OCI-LY7 (cell line): ENCODE measurements at regions of chr13 and their contacts with region 1.

Region 1: GRCh38 chr13:33799950-33800592 is 17.9 kb upstream of the RFC3 start:
- DNase-seq: peak; percentile 76
- H3K4me3 ChIP-seq: no peak overlapping the region
- H3K27ac ChIP-seq: peak overlapping the region; percentile 43
- H3K4me1 ChIP-seq: peaks cover 49% of the 10 kb centered on the region
- CTCF ChIP-seq: peak; percentile 91

Region 2: DNA sequence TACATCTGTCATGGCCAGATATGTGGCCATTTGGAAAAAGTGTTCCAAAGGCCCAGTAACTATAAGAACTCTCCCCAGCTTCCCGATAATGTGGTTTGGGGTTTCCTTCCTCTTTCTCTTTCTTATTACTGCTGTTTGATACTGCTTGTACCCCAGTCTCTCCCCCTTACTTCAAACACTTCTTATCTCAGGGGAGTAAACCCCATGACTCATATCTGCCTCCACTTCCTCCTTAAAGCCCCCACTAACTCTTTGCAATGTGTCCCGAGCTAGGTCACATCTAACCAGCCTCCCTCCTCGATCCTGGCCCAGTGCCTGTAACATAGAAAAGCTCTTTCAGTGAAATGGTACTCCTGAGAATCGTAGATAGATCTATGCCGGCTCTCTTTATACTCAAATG is 432.1 kb before region 1 on chr13:
- CTCF ChIA-PET with region 1: no interaction called
- POLR2A ChIA-PET with region 1: no interaction called
- intact Hi-C with region 1: no loop called
- DNase-seq: no peak
- H3K4me3 ChIP-seq: no peak overlapping the region
- H3K27ac ChIP-seq: no peak overlapping the region
- H3K4me1 ChIP-seq: no peaks in the 10 kb centered on the region
- CTCF ChIP-seq: no peak

Region 3: DNA sequence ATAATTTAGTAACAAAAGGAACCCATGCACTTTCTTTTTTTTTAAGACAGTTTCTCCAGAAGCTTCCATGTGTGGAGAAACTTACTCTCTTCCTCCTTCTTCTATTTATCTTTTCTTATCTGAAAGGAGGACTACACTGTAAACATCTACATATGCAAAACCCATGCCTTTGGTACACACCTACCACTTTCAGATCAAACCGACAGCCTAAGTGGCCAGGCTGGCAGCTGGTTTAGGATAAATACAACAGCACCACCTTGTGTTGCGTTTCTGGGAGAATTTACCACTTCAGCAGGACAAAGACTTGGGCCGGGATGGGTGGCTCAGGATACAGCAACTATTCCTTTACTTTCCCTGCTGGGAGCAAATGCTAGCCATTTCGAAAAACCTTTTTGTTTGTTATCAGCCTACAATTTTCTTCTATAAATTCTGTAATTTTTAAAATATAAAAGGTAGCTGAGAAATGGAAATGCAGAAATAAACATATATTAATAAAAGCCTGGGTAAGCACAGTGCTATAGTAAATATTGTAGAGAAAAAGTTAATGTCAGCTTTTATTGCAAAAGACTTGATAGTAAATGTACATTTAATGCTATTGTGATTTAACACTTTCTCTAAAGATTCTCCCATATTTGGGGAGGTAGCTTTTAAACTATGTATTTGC is 76.2 kb before region 1 on chr13:
- CTCF ChIA-PET with region 1: no interaction called
- POLR2A ChIA-PET with region 1: interaction called, 22 read pairs
- intact Hi-C with region 1: no loop called
- DNase-seq: peak; percentile 91
- H3K4me3 ChIP-seq: no peak overlapping the region
- H3K27ac ChIP-seq: peak overlapping the region; percentile 24
- H3K4me1 ChIP-seq: peaks cover 54% of the 10 kb centered on the region
- CTCF ChIP-seq: peak; percentile 91

Region 4: DNA sequence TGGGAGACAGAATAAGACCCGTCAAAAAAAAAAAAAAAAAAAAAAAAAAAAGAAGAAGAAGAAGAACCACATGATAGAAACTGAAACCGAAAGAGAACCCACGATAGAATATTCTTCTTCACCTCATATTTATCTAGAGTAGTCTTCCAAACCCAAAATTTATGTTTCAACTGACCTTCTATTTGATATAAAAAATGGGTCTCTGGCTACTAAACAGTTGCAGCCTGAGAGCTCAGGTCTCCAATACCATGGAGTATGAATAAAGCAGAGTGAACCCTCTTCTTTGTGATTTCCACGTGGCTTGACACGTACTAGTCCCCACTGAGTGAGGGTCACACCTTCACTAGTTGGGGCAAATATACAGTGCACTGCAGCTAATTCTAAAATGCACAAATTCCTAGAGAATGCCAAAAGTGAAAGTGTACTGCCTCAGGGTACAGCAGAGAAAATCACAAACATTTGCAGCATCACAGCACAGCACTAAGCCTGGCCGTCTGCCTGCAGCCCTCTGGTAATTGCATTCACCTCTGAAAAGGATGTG is 12.9 kb before region 1 on chr13:
- CTCF ChIA-PET with region 1: interaction called, 3 read pairs
- POLR2A ChIA-PET with region 1: interaction called, 46 read pairs
- intact Hi-C with region 1: no loop called
- DNase-seq: peak; percentile 53
- H3K4me3 ChIP-seq: peak overlapping the region; percentile 58
- H3K27ac ChIP-seq: peak overlapping the region; percentile 53
- H3K4me1 ChIP-seq: peaks cover 29% of the 10 kb centered on the region
- CTCF ChIP-seq: no peak

Region 5: DNA sequence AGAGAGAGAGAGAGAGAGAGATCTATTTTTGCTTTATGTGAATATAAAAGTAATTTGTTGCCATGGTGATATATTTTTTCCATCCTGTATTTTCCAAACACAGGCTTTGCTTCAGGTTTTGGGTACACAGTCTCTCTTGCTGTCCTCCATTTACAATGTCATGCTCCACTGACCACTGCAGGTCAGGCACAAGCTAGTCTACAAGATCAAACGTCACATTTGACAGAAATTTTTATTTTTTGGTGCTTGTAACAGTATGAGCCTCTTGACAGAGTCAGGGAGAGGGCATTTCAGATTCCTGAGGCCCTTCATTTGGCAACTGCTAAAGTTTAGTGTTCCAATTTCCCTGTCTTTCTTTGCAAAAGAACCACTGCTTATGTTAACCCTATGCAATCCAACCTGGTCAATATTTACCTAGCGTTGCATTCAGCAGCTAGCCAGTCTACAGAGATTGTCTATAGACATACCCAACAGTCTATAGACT is 192.8 kb after region 1 on chr13:
- CTCF ChIA-PET with region 1: no interaction called
- POLR2A ChIA-PET with region 1: interaction called, 4 read pairs
- intact Hi-C with region 1: loop called (anchors 10 kb)
- DNase-seq: peak; percentile 57
- H3K4me3 ChIP-seq: peak overlapping the region; percentile 29
- H3K27ac ChIP-seq: peak overlapping the region; percentile 34
- H3K4me1 ChIP-seq: peaks cover 41% of the 10 kb centered on the region
- CTCF ChIP-seq: no peak

Region 6: DNA sequence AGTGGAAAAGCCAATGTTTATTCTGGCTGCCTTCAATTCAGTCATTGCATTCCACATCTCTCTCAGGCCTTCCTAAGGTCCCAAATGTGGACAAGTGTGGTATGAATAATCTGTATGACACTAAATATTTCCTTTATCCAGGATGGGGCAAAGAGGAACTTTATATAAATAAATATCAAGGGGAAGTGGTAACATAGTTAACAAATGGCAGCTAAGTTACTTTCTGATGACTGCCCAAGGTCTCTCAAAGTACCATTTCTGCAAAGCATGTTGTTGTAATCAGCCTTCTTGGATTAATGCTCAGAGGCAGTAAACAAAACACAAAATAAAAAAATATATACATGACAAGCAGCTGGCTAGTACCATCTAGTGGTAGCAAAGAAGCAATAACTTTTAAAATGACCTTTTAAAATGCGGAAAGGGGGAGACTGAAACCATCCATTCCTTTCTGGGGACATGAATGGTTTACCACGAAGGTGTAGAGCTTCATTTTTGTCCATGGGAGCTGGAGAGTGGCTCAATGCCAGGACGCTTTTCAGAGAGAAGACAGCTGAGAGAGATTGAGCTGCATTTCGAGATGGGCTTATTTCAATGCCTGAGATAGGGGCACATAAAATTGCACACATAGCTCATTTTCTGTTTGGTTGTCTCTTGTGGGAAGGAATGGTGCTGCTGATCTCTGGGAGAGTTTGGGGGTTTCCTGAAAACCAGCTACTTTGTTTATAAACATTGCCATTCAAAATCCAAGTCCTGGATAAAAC is 277.1 kb after region 1 on chr13:
- CTCF ChIA-PET with region 1: interaction called, 9 read pairs
- POLR2A ChIA-PET with region 1: interaction called, 3 read pairs
- intact Hi-C with region 1: loop called (anchors 1 kb)
- DNase-seq: peak; percentile 62
- H3K4me3 ChIP-seq: no peak overlapping the region
- H3K27ac ChIP-seq: no peak overlapping the region
- H3K4me1 ChIP-seq: peaks cover 9% of the 10 kb centered on the region
- CTCF ChIP-seq: peak; percentile 93